Ascending aorta (tissue), 2 donors: ENCODE measurements at regions of chr12 and their contacts with region 1.

Region 1: GRCh38 chr12:76763743-76764675 is at the start of gene ZDHHC17:
- DNase-seq: peak; percentile 66 to 93
- H3K4me3 ChIP-seq: peak within 1 kb of the TSS; percentile 67 to 87
- H3K27ac ChIP-seq: peak within 1 kb of the TSS; percentile 95 to 96
- H3K4me1 ChIP-seq: peaks cover 0 to 3% of the 10 kb centered on the region in 2 donors
- H3K27me3 ChIP-seq: no peaks in the 10 kb centered on the region
- CTCF ChIP-seq: no peak
- total RNA-seq, gene ZDHHC17: 24.3 TPM

Region 2: DNA sequence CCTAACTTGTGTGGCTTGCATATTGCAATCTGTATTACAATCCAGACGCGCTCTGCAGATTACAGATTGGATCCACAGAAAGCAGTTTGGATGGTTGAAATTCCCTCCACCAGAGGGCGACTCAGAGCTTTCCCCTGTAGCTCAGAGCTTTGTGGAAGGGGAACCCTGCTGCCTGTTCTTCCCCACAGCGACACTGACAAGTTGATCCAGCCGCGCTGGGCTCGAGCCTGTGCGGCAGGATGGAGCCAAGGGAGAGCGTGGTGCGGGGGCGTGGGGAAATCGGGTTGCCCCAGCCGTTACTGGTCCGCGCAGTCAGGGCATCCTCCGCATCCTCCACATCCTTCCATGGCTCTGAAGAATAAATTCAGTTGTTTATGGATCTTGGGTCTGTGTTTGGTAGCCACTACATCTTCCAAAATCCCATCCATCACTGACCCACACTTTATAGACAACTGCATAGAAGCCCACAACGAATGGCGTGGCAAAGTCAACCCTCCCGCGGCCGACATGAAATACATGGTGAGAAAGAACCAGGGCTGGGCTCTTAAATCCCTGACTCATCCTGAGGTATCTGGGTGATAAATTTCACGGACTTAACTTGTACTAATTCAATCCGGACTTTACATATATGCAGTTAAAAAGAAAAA is 1429.5 kb before region 1 on chr12 and contains the start of gene GLIPR1L1:
- intact Hi-C with region 1: loop called (anchors 10 kb)
- DNase-seq: peak; percentile 43 to 96
- H3K4me3 ChIP-seq: peak within 1 kb of the TSS; percentile 54 to 63
- H3K27ac ChIP-seq: peak within 1 kb of the TSS; percentile 28 to 32
- H3K4me1 ChIP-seq: peaks cover 5 to 8% of the 10 kb centered on the region in 2 donors
- H3K27me3 ChIP-seq: no peaks in the 10 kb centered on the region
- CTCF ChIP-seq: peak; percentile 80 to 91 (median 87)
- total RNA-seq, gene GLIPR1L1: not detected

Region 3: GRCh38 chr12:76057326-76057725 is 706.7 kb before region 1 on chr12:
- intact Hi-C with region 1: no loop called
- DNase-seq: no peak
- H3K4me3 ChIP-seq: no peak overlapping the region
- H3K27ac ChIP-seq: no peak overlapping the region
- H3K4me1 ChIP-seq: no peaks in the 10 kb centered on the region
- H3K27me3 ChIP-seq: no peaks in the 10 kb centered on the region
- CTCF ChIP-seq: no peak

Region 4: DNA sequence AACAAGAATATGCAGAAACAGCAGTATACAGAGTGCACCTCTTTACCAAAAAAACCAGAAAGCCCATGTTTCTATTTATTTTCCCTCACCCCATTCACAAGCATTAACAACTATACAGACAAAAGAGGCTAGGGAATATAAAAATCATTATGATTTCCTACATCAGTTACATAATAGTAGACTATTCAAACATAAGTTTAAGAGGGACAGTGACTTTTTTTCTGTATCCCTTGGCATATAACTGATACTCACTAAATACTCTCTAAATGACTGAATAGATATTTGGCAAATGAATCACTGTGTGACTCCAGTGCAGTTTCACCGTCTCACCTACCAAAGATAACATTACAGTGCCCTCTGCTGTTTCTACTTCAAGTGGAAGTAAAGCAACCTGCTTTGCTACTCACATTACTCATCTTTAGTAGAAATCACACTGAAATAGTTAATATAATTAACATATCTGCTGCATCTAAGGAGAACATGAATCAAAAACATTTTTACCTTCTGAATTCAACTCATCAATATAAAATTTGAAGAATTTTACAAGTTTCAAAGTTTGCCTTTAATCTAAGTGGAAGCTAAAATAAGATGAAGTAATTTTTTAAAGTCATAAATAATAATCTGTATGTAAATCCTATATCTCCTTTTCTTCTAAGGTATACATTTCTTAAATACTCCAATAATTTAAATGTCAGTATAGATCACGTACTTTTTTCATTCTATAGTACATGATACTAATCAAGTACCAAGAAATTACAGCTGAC is 308.2 kb before region 1 on chr12:
- intact Hi-C with region 1: loop called (anchors 10 kb)
- DNase-seq: no peak
- H3K4me3 ChIP-seq: no peak overlapping the region
- H3K27ac ChIP-seq: peak overlapping the region in 1 of 2 donors; percentile 29
- H3K4me1 ChIP-seq: no peaks in the 10 kb centered on the region
- H3K27me3 ChIP-seq: no peaks in the 10 kb centered on the region
- CTCF ChIP-seq: peak in 2 of 3 experiments; percentile 40 to 63

Region 5: DNA sequence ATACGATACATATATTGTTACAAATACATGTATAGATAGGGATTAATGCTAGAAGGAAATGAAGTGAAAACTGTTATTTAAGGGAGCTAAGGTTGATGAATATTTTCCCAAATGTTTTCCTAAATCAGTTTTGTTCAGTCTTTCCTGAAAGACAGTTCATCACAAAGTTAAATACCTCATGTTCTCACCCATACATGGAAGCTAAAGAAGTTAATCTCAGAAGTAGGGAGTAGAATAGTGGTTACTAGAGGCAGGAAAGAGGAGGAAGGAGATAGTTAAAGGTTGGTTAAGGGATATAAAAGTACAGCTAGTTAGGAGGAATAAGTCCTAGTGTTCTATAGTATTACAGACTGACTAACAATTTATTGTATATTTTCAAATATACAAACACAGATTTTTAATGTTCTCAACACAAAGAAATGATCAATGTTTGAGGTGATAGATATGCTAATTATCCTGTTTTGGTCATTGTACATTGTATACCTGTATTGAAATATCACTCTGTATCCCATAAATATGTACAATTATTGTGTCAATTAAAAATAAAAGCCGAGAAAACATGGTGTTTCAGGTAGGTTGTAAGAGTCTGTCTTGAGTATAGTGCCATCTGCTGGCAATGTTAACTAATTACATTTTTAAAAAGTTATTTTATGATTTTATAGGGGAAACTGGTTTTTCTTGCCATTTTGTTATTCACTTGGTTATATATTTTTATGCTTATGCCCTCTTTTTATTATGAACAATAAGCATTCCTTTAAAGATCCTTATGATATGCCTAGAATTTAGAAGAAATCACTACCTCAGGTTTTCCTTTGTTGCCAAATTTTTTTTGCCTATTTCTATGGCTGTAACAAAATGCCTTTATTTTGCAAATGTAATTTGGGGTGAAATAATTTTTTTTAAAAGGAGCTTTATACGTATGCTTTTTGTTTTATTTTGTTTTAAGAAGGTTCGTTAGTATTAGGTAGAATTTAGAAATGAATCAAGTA is 26.8 kb after region 1 on chr12:
- intact Hi-C with region 1: loop called (anchors 2 kb)
- DNase-seq: no peak
- H3K4me3 ChIP-seq: no peak overlapping the region
- H3K27ac ChIP-seq: no peak overlapping the region
- H3K4me1 ChIP-seq: peaks cover 0 to 3% of the 10 kb centered on the region in 2 donors
- H3K27me3 ChIP-seq: no peaks in the 10 kb centered on the region
- CTCF ChIP-seq: peak; percentile 36 to 71 (median 54)

Region 6: GRCh38 chr12:76920172-76921014 is 156.4 kb after region 1 on chr12:
- intact Hi-C with region 1: loop called (anchors 5 kb)
- DNase-seq: no peak
- H3K4me3 ChIP-seq: no peak overlapping the region
- H3K27ac ChIP-seq: peak overlapping the region in 1 of 2 donors; percentile 66
- H3K4me1 ChIP-seq: peaks cover under 1 to 13% of the 10 kb centered on the region in 2 donors
- H3K27me3 ChIP-seq: no peaks in the 10 kb centered on the region
- CTCF ChIP-seq: no peak